ENCODE measurements at regions of chr4 and their contacts with region 1.

Region 1: DNA sequence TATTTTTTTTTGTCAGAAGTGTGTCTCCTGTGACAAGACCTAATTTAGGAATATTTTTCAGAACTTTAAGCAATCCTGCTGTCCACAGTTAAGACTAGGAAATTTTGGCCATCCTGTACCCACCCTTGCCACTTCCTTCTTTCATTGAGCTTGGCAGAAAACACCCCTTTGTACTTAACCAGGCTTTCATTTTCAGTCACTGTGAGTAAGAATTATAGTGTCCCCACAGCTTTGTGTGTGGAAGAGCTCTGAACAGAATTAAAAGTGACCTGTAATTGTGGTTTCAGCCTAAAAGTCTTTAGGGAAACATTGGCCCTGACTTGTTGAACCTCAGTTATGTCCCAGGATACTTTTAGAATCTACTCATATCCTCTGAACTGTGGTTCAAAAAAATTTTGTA is 153.7 kb upstream of the BMP3 start:
- DNase-seq: no peak
- ATAC-seq: no peak
- H3K4me3 ChIP-seq: no peak overlapping the region
- H3K27ac ChIP-seq: no peak overlapping the region
- H3K4me1 ChIP-seq: no peaks in the 10 kb centered on the region
- H3K27me3 ChIP-seq: no peaks in the 10 kb centered on the region
- CTCF ChIP-seq: no peak

Region 2: GRCh38 chr4:80948141-80948540 is 71.3 kb after region 1 on chr4:
- intact Hi-C with region 1: loop called in 1 of 2 experiments (anchors 10 kb)
- DNase-seq: no peak
- ATAC-seq: no peak
- H3K4me3 ChIP-seq: no peak overlapping the region
- H3K27ac ChIP-seq: no peak overlapping the region
- H3K4me1 ChIP-seq: no peaks in the 10 kb centered on the region
- H3K27me3 ChIP-seq: no peaks in the 10 kb centered on the region
- CTCF ChIP-seq: no peak

Region 3: GRCh38 chr4:81106150-81106549 is 229.3 kb after region 1 on chr4:
- intact Hi-C with region 1: no loop called
- DNase-seq: no peak
- ATAC-seq: no peak
- H3K4me3 ChIP-seq: no peak overlapping the region
- H3K27ac ChIP-seq: no peak overlapping the region
- H3K4me1 ChIP-seq: no peaks in the 10 kb centered on the region
- H3K27me3 ChIP-seq: no peaks in the 10 kb centered on the region
- CTCF ChIP-seq: no peak

Measured in psoas muscle (tissue), 8 donors.